Heart right ventricle (tissue), 16 donors: ENCODE measurements at regions of chr1 and their contacts with region 1.

Region 1: GRCh38 chr1:201224666-201225370 is 34.2 kb downstream of the IGFN1 start:
- DNase-seq: no peak
- ATAC-seq: no peak
- H3K4me3 ChIP-seq: no peak overlapping the region
- H3K27ac ChIP-seq: no peak overlapping the region
- H3K4me1 ChIP-seq: no peaks in the 10 kb centered on the region
- H3K27me3 ChIP-seq: peaks cover 0 to 13% (median 0%) of the 10 kb centered on the region in 7 donors
- CTCF ChIP-seq: no peak

Region 2: DNA sequence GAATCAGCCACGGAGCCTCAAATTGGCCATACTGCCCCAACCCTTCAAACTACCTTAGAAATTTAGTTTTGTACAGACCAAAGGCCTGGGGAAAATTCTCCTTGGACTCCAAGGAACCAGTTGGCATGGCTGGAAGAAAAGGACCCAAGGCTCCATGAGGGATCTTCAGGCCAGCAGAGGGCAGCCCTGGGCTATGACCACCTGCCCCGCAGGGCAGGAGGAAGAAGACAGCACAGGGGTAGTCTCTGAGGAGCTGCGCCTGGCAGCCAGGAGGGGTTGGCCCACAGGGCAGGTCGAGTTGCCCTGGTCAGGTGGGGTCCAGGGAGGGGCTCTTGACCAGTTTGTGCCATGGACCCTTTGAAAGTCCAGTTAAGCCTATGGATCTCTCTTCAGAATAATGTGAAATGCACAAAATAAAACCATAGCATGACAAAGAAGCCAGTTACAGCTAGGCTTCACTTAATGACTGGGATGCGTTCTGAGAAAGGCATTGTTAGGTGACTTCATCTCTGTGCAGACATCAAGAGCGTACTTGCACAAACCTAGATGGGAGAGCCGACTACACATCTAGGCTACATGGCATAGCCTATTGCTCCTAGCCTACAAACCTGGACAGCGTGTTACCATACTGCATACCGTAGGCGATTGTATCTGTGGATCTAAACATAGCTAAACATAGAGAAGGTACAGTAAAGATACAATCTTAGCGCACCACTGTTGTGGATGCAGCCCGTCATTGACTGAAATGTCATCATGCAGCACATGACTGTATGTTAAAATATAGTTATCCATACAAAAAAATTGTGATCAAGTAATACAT is 138.7 kb before region 1 on chr1:
- intact Hi-C with region 1: loop called in 3 of 10 experiments (anchors 5 to 10 kb)
- DNase-seq: peak; percentile 17 to 44
- ATAC-seq: peak; percentile 49 to 76 (median 63)
- H3K4me3 ChIP-seq: no peak overlapping the region
- H3K27ac ChIP-seq: no peak overlapping the region
- H3K4me1 ChIP-seq: peaks cover 0 to 5% (median 0%) of the 10 kb centered on the region in 9 donors
- H3K27me3 ChIP-seq: peaks cover 0 to 34% (median 5%) of the 10 kb centered on the region in 7 donors
- CTCF ChIP-seq: peak in 8 of 9 donors; percentile 14 to 61 (median 55)

Region 3: GRCh38 chr1:201170533-201171062 is 54.2 kb before region 1 on chr1:
- intact Hi-C with region 1: no loop called
- DNase-seq: peak; percentile 94 to 95
- ATAC-seq: peak; percentile 98 to 100 (median 99)
- H3K4me3 ChIP-seq: peak overlapping the region; percentile 51 to 90 (median 73)
- H3K27ac ChIP-seq: peak overlapping the region; percentile 85 to 94 (median 91)
- H3K4me1 ChIP-seq: peaks cover 0 to 22% (median 5%) of the 10 kb centered on the region in 9 donors
- H3K27me3 ChIP-seq: no peaks in the 10 kb centered on the region
- CTCF ChIP-seq: peak in 1 of 9 donors; percentile 3

Region 4: GRCh38 chr1:201329286-201329685 is 104.5 kb after region 1 on chr1:
- intact Hi-C with region 1: no loop called
- DNase-seq: no peak
- ATAC-seq: peak in 7 of 8 donors; percentile 12 to 69 (median 45)
- H3K4me3 ChIP-seq: no peak overlapping the region
- H3K27ac ChIP-seq: peak overlapping the region in 3 of 10 donors; percentile 26 to 45 (median 41)
- H3K4me1 ChIP-seq: peaks cover 0 to 21% (median 4%) of the 10 kb centered on the region in 9 donors
- H3K27me3 ChIP-seq: no peaks in the 10 kb centered on the region
- CTCF ChIP-seq: no peak